ENCODE measurements at regions of chr19 and their contacts with region 1.

Region 1: GRCh38 chr19:18519962-18520847 is 1.7 kb downstream of the ELL start:
- DNase-seq: peak; percentile 77 to 89
- H3K4me3 ChIP-seq: peak overlapping the region; percentile 73 to 99 (median 91)
- H3K27ac ChIP-seq: peak overlapping the region; percentile 97 to 100 (median 99)
- H3K4me1 ChIP-seq: peaks cover 28 to 58% (median 54%) of the 10 kb centered on the region in 4 donors
- H3K27me3 ChIP-seq: no peaks in the 10 kb centered on the region
- CTCF ChIP-seq: peak in 5 of 7 experiments; percentile 41 to 71 (median 50)
- EP300 ChIP-seq: no peak
- POLR2A ChIP-seq: no peak

Region 2: DNA sequence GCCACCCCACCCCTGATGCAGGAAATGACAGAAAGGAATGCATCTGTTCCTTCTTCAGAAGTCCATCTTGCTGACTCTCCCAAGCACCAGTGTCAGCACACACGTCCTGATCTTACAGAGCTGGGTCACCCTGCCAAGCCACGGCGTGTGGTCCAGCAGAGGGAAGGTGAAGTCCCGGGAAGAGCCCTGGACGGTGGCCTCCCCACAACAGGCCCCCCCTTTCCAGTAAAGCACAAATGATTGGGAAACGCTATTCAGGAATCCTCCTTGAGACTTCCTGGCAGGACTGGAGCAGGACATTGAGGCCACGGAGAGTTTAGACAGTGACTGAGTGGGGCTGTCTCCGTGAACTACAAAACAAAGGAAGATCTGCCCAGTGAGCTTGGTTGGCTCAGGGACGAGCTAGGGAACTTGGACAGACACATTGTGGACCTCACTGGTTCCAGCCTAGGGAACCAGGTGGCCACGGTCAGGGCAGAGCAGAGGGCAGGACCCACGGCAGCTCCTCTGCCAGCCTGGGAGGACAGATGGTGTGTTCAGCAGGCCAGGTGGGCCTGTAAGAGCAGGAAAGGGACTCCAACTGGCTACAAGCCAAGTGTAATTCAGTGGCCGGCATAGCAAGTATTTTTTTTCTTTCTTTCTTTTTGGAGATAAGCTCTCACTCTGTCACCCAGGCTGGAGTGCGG is 40.1 kb before region 1 on chr19:
- intact Hi-C with region 1: loop called (anchors 5 kb)
- DNase-seq: peak; percentile 49 to 59
- H3K4me3 ChIP-seq: no peak overlapping the region
- H3K27ac ChIP-seq: peak overlapping the region; percentile 26 to 92 (median 81)
- H3K4me1 ChIP-seq: peaks cover 43 to 92% (median 75%) of the 10 kb centered on the region in 4 donors
- H3K27me3 ChIP-seq: no peaks in the 10 kb centered on the region
- CTCF ChIP-seq: no peak
- EP300 ChIP-seq: peak; percentile 91
- POLR2A ChIP-seq: no peak

Region 3: DNA sequence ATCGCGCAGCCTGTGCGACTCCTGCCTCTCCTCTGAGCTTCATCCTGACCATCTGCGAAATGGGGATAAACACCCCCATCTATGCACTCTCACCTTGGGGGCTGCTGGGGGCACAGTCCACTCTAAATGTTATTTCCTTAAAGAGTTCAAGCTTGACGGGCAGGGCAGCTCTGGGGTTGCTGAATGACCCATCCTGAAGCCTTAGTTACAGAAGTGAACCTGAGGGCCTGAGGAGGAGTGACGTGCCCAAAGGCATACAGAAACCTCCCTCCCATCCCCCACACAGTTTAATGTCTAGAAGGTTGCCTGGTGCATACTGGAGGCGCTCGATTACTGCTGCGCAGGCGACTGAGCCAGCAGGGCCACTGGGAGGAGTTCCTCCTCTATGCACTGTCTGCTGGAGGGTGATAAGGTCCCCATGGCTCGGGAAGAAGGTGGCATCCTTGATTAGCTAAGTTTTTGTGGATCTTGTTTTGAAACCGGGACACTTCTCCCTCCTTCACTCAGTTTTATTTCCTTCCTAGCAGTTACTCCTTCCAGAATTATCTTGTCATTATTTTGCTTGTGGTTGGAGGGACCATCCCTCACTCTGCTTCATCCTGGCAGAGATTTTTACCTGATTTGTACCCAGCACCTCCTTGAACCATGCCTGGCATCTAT is 23.7 kb after region 1 on chr19:
- intact Hi-C with region 1: no loop called
- DNase-seq: peak; percentile 51 to 84
- H3K4me3 ChIP-seq: peak overlapping the region; percentile 75 to 93 (median 91)
- H3K27ac ChIP-seq: peak overlapping the region; percentile 6 to 96 (median 91)
- H3K4me1 ChIP-seq: peaks cover 9 to 27% (median 21%) of the 10 kb centered on the region in 4 donors
- H3K27me3 ChIP-seq: no peaks in the 10 kb centered on the region
- CTCF ChIP-seq: no peak
- EP300 ChIP-seq: no peak
- POLR2A ChIP-seq: no peak

Region 4: DNA sequence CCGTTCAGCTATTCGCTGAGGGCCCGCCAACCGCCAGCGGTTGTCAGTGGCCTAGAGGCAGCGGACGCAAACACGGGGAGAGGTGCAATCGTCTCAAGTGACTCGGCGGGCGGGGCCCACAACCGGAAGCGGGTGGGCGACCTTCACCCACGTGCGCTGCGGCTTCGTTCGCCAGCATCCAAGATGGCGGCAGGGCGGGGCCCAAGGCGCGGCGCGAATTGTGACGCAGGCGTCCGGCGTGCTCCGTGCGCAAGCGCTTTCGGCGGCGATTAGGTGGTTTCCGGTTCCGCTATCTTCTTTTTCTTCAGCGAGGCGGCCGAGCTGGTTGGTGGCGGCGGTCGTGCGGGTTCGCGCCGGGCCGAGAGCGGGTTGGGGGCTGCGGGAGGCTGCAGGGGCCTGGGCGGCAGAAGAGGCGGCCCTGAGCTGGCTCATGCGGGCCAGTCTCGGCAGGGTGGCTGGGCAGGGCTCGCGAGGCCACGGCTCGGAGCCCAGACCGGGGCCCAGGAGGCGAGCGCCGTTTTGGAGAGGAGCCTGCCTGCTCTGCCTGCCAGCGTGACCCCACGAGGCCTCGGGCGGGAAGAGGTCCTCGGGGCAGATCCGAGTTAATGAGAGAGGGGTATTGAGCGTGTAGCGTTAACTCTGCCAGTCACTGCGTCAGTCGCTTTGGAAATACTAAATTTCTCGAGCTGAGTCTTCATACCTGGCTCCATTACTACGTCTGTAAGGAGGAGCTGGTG is 51.5 kb after region 1 on chr19 and contains the start of gene UBA52:
- intact Hi-C with region 1: no loop called
- DNase-seq: peak; percentile 99 to 100
- H3K4me3 ChIP-seq: peak within 1 kb of the TSS; percentile 77 to 94 (median 86)
- H3K27ac ChIP-seq: peak within 1 kb of the TSS; percentile 91 to 98 (median 93)
- H3K4me1 ChIP-seq: peaks cover 15 to 31% (median 26%) of the 10 kb centered on the region in 4 donors
- H3K27me3 ChIP-seq: no peaks in the 10 kb centered on the region
- CTCF ChIP-seq: no peak
- EP300 ChIP-seq: no peak
- POLR2A ChIP-seq: peak in 2 of 4 donors; percentile 50 to 67
- total RNA-seq, gene UBA52: 84.3 to 596 (median 358) TPM

Region 5: DNA sequence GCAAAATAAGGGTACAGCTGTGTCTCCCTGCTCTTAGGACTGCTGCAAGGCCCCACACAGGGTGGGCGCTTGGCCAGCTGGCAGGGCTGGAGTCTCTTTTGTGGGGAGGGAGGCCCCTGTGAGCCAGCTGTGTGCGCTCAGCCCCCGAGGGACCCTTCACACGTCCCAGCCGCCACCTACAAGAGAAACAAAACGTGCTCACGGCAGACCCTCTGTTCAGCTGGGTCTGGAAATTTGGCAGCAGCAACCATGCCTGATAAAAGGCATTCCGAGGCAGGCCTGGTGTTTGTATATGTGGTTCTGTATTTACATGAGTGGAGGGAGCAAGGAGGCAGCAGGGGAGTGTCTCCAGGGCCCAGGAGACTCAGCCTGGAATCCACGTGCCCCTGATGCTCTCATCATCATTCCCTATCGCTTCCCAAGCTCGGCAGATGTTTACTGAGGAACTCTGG is 213.0 kb after region 1 on chr19:
- intact Hi-C with region 1: no loop called
- DNase-seq: peak; percentile 57 to 86
- H3K4me3 ChIP-seq: no peak overlapping the region
- H3K27ac ChIP-seq: peak overlapping the region; percentile 10 to 64 (median 46)
- H3K4me1 ChIP-seq: peaks cover 41 to 72% (median 60%) of the 10 kb centered on the region in 4 donors
- H3K27me3 ChIP-seq: no peaks in the 10 kb centered on the region
- CTCF ChIP-seq: no peak
- EP300 ChIP-seq: no peak
- POLR2A ChIP-seq: no peak

Measured in stomach (tissue), 19 donors.